ENCODE measurements at regions of chr18 and their contacts with region 1.

Region 1: DNA sequence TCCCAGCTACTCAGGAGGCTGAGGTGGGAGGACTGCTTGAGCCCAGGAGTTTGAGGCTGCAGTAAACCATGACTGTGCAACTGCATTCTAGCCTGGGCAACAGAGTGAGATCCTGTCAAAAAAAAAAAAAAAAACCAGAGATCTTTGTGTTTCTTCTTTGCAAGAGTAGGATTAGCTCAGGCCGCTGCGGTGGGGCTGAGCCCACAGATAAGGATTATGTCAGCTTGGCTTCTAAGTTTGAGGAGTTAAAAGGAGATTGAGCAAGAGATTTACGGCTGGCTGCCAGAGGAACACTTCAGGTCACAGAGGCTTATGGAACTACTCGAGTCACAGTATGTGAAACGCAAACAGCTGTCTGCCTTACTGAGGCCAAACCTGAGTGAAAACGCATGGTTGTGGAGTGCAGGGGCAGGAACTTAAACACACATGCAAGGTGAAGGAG is 146.7 kb upstream of the L3MBTL4 start:
- DNase-seq: no peak
- H3K4me3 ChIP-seq: no peak overlapping the region
- H3K27ac ChIP-seq: no peak overlapping the region
- H3K4me1 ChIP-seq: no peaks in the 10 kb centered on the region
- H3K27me3 ChIP-seq: peaks cover 57% of the 10 kb centered on the region
- CTCF ChIP-seq: no peak

Region 2: DNA sequence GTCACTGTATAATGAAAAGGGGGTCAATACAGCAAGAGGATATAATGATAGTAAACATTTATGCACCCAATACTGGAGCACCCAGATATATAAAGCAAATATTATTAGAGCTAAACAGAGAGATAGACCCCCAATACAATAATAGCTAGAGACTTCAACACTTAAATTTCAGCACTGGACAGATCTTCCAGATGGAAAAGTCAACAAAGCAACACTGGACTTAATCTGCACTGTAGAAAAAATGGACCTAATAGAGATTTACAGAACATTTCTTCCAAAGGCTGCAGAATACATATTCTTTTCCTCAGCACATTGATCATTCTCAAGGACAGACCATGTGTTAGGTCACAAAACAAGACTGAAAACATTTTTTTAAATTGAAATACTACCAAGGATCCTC is 1292.6 kb before region 1 on chr18:
- CTCF ChIA-PET with region 1: no interaction called
- POLR2A ChIA-PET with region 1: no interaction called
- intact Hi-C with region 1: no loop called
- DNase-seq: no peak
- H3K4me3 ChIP-seq: no peak overlapping the region
- H3K27ac ChIP-seq: no peak overlapping the region
- H3K4me1 ChIP-seq: no peaks in the 10 kb centered on the region
- H3K27me3 ChIP-seq: no peaks in the 10 kb centered on the region
- CTCF ChIP-seq: no peak

Region 3: DNA sequence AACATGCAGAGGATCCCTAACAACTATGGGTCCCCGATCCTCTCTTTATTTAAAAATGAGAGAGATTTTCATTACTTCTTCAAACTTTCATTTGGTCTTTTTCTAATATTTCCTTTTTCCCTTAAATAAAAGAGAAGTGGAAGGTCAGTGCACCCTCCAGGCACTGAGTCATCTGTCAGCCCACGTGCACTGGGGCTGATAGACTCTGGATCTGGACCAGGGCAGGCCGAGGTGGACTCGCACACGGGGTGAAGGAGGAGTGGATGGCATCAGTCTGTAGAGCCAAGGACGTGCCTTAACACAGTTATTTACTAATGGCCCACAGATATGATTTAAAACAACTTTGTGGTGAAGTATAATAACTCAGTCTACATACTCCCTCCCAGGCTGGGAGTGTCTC is 451.7 kb before region 1 on chr18:
- CTCF ChIA-PET with region 1: no interaction called
- POLR2A ChIA-PET with region 1: no interaction called
- intact Hi-C with region 1: no loop called
- DNase-seq: no peak
- H3K4me3 ChIP-seq: no peak overlapping the region
- H3K27ac ChIP-seq: no peak overlapping the region
- H3K4me1 ChIP-seq: no peaks in the 10 kb centered on the region
- H3K27me3 ChIP-seq: peaks cover 2% of the 10 kb centered on the region; the same call in 1 of the 2 replicates
- CTCF ChIP-seq: no peak

Region 4: DNA sequence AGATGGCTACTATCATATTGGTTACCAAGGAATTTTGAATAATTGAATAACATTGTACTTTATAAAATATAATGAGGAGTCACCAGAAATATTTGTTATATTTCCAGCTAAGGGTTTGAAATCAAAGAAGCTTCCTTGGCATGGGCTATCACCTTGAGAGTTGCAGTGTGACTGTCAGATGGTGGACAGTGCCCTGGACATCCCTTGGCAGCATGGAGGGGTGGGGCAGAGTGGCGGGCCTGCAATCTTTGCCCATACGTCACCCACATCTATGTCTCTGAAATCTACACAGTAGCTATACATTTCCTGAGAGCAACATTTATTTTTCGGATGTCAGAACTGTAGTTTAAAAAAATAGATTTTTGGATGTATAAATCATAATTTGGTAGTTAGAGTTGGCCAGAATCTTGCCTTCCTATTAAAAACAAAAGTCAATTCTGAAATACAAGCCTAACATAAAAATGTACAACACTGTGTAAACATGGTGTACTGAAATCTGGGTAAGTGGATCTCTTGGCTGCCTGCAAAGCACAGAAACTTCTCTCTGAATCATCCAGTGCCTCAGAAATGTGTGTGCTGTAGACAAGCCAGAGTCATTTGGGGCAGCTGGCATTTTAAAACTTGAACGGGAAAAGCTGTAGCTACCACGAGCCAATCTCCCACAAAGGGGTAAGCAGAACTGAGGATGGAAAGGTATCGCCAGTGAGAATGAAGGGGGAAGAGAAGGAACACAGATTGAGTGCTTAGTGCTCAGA is 43.9 kb after region 1 on chr18:
- CTCF ChIA-PET with region 1: no interaction called
- POLR2A ChIA-PET with region 1: no interaction called
- intact Hi-C with region 1: loop called (anchors 10 kb)
- DNase-seq: no peak
- H3K4me3 ChIP-seq: no peak overlapping the region
- H3K27ac ChIP-seq: no peak overlapping the region
- H3K4me1 ChIP-seq: no peaks in the 10 kb centered on the region
- H3K27me3 ChIP-seq: no peaks in the 10 kb centered on the region; the same call in 1 of the 2 replicates
- CTCF ChIP-seq: no peak

Region 5: DNA sequence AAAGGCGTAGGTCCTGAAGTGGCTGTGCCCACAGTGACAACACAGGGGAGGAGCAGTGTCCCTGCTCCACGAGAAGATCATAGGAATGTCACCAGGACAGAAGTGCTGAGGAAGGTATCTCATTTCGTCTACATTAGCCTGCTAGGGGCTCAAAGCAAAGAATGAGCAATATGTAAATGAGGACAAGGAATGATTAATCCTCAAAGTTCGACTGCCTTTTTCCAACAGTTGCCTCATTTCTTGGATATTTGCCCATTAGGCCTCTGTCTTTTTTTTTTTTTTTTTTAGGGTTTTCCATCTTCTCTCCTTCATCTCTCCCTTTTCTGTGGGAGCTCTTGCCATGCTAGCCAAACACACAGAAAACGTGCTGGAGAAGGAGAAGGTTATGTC is 62.8 kb after region 1 on chr18:
- CTCF ChIA-PET with region 1: no interaction called
- POLR2A ChIA-PET with region 1: no interaction called
- intact Hi-C with region 1: loop called (anchors 10 kb)
- DNase-seq: no peak
- H3K4me3 ChIP-seq: no peak overlapping the region
- H3K27ac ChIP-seq: no peak overlapping the region
- H3K4me1 ChIP-seq: no peaks in the 10 kb centered on the region
- H3K27me3 ChIP-seq: peaks cover 15% of the 10 kb centered on the region; the same call in 1 of the 2 replicates
- CTCF ChIP-seq: no peak